Naive thymus-derived CD4-positive, alpha-beta T cell (primary cell): ENCODE measurements at regions of chr7 and their contacts with region 1.

Region 1: GRCh38 chr7:33062782-33063443 is 337 bp upstream of the NT5C3A start:
- DNase-seq: peak; percentile 90 to 95 (median 93)
- ATAC-seq: peak; percentile 97
- H3K4me3 ChIP-seq: peak overlapping the region; percentile 96
- H3K4me3 Mint-ChIP-seq: peak overlapping the region; percentile 91 to 98 (median 96)
- H3K27ac ChIP-seq: peak overlapping the region; percentile 82
- H3K27ac Mint-ChIP-seq: peak overlapping the region; percentile 92 to 99 (median 96)
- H3K4me1 ChIP-seq: peaks cover 23 to 32% of the 10 kb centered on the region in 2 donors
- H3K4me1 Mint-ChIP-seq: peaks cover 20 to 50% (median 39%) of the 10 kb centered on the region in 7 donors
- H3K27me3 ChIP-seq: no peaks in the 10 kb centered on the region
- H3K27me3 Mint-ChIP-seq: peaks cover 0 to 14% (median 0%) of the 10 kb centered on the region in 5 donors

Region 2: DNA sequence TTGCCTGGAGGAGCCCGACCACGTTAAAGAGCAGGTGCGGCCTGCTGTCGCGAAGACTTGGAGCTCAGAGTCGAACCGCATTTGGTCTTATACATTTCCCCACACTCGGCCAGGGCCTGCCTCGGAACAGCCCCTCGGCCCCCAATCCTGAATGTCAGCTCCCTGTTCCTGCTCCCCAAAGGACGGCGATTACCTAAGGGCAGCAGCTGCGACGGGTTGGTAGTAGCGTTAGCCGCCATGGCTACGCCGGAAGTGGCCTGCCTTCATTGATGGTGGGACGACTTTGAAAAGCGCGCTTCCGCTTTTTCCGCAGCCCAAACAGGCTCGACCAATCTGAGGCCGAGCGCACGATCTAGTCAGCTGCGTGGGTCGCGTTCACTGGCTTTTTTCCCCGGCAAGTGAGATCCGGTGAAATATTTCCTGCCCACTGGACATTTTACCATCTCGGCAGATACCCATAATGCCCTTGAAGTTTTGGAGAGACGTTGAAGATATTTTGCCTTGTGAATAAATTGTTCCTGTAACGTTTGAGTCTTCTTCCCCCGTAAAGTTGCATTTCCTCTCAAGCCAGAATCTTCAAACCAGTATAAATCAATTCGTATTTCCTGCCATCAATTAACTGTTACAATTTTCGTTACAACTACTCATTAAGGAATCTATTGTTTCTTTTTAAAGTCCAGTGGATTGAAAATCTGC is 572.6 kb before region 1 on chr7 and contains the start of gene LSM5:
- CTCF ChIA-PET with region 1: no interaction called
- POLR2A ChIA-PET with region 1: interaction called, 10 read pairs
- intact Hi-C with region 1: loop called (anchors 1 kb)
- DNase-seq: peak; percentile 77 to 91 (median 89)
- ATAC-seq: peak; percentile 84
- H3K4me3 ChIP-seq: peak within 1 kb of the TSS; percentile 86
- H3K4me3 Mint-ChIP-seq: peak within 1 kb of the TSS; percentile 83 to 98 (median 92)
- H3K27ac ChIP-seq: peak within 1 kb of the TSS; percentile 87
- H3K27ac Mint-ChIP-seq: peak within 1 kb of the TSS; percentile 90 to 98 (median 96)
- H3K4me1 ChIP-seq: peaks cover 8 to 13% of the 10 kb centered on the region in 2 donors
- H3K4me1 Mint-ChIP-seq: peaks cover 12 to 43% (median 31%) of the 10 kb centered on the region in 7 donors
- H3K27me3 ChIP-seq: no peaks in the 10 kb centered on the region
- H3K27me3 Mint-ChIP-seq: no peaks in the 10 kb centered on the region
- total RNA-seq, gene LSM5: 21.5 to 58.8 (median 39.4) TPM

Region 3: GRCh38 chr7:32846701-32847100 is 216.2 kb before region 1 on chr7:
- CTCF ChIA-PET with region 1: interaction called, 6 read pairs
- POLR2A ChIA-PET with region 1: no interaction called
- intact Hi-C with region 1: loop called in 1 of 2 experiments (anchors 1 kb)
- DNase-seq: peak; percentile 77 to 89 (median 86)
- ATAC-seq: peak; percentile 100
- H3K4me3 ChIP-seq: no peak overlapping the region
- H3K4me3 Mint-ChIP-seq: peak overlapping the region in 6 of 10 donors; percentile 15 to 42 (median 30)
- H3K27ac ChIP-seq: no peak overlapping the region
- H3K27ac Mint-ChIP-seq: peak overlapping the region in 1 of 9 donors; percentile 33
- H3K4me1 ChIP-seq: peaks cover 7% of the 10 kb centered on the region in 2 donors
- H3K4me1 Mint-ChIP-seq: peaks cover 6 to 10% (median 9%) of the 10 kb centered on the region in 7 donors
- H3K27me3 ChIP-seq: peaks cover 0 to under 1% of the 10 kb centered on the region in 2 donors
- H3K27me3 Mint-ChIP-seq: peaks cover 12 to 44% (median 23%) of the 10 kb centered on the region in 5 donors

Region 4: GRCh38 chr7:32905175-32905662 is 157.7 kb before region 1 on chr7:
- CTCF ChIA-PET with region 1: no interaction called
- POLR2A ChIA-PET with region 1: interaction called, 3 read pairs
- intact Hi-C with region 1: loop called in 1 of 2 experiments (anchors 1 kb)
- DNase-seq: peak; percentile 37 to 88 (median 82)
- ATAC-seq: peak; percentile 92
- H3K4me3 ChIP-seq: peak overlapping the region; percentile 63
- H3K4me3 Mint-ChIP-seq: peak overlapping the region; percentile 73 to 89 (median 85)
- H3K27ac ChIP-seq: peak overlapping the region; percentile 84
- H3K27ac Mint-ChIP-seq: peak overlapping the region; percentile 86 to 96 (median 94)
- H3K4me1 ChIP-seq: peaks cover 6 to 16% of the 10 kb centered on the region in 2 donors
- H3K4me1 Mint-ChIP-seq: peaks cover 4 to 27% (median 24%) of the 10 kb centered on the region in 7 donors
- H3K27me3 ChIP-seq: no peaks in the 10 kb centered on the region
- H3K27me3 Mint-ChIP-seq: no peaks in the 10 kb centered on the region

Region 5: GRCh38 chr7:33040803-33041516 is 22.0 kb before region 1 on chr7:
- CTCF ChIA-PET with region 1: interaction called, 4 read pairs
- POLR2A ChIA-PET with region 1: interaction called, 35 read pairs
- intact Hi-C with region 1: loop called (anchors 1 kb)
- DNase-seq: peak in 8 of 9 donors; percentile 44 to 90 (median 78)
- ATAC-seq: peak; percentile 99
- H3K4me3 ChIP-seq: peak overlapping the region; percentile 40
- H3K4me3 Mint-ChIP-seq: peak overlapping the region; percentile 71 to 89 (median 84)
- H3K27ac ChIP-seq: peak overlapping the region; percentile 80
- H3K27ac Mint-ChIP-seq: peak overlapping the region; percentile 75 to 95 (median 90)
- H3K4me1 ChIP-seq: peaks cover 3 to 22% of the 10 kb centered on the region in 2 donors
- H3K4me1 Mint-ChIP-seq: peaks cover 18 to 72% (median 65%) of the 10 kb centered on the region in 7 donors
- H3K27me3 ChIP-seq: no peaks in the 10 kb centered on the region
- H3K27me3 Mint-ChIP-seq: no peaks in the 10 kb centered on the region